WTC11 (cell line): ENCODE measurements at regions of chr5 and their contacts with region 1.

Region 1: GRCh38 chr5:151002250-151002649 is 18.1 kb upstream of the GPX3 start:
- DNase-seq: no peak
- ATAC-seq: peak; percentile 75
- H3K4me3 Mint-ChIP-seq: no peak overlapping the region
- H3K27ac Mint-ChIP-seq: no peak overlapping the region
- H3K4me1 Mint-ChIP-seq: peaks cover 12% of the 10 kb centered on the region
- H3K27me3 Mint-ChIP-seq: no peaks in the 10 kb centered on the region
- CTCF ChIP-seq: no peak

Region 2: GRCh38 chr5:150778517-150779396 is 223.5 kb before region 1 on chr5 and contains the start of gene SMIM3:
- CTCF ChIA-PET with region 1: no interaction called
- POLR2A ChIA-PET with region 1: no interaction called
- DNase-seq: peak; percentile 88
- ATAC-seq: peak; percentile 86
- H3K4me3 Mint-ChIP-seq: peak within 1 kb of the TSS; percentile 97
- H3K27ac Mint-ChIP-seq: peak within 1 kb of the TSS; percentile 95
- H3K4me1 Mint-ChIP-seq: peaks cover 49% of the 10 kb centered on the region
- H3K27me3 Mint-ChIP-seq: peaks cover 18% of the 10 kb centered on the region
- CTCF ChIP-seq: no peak
- total RNA-seq, gene SMIM3: 11.1 to 14.1 TPM (median 12.2 TPM) in 3 replicates

Region 3: DNA sequence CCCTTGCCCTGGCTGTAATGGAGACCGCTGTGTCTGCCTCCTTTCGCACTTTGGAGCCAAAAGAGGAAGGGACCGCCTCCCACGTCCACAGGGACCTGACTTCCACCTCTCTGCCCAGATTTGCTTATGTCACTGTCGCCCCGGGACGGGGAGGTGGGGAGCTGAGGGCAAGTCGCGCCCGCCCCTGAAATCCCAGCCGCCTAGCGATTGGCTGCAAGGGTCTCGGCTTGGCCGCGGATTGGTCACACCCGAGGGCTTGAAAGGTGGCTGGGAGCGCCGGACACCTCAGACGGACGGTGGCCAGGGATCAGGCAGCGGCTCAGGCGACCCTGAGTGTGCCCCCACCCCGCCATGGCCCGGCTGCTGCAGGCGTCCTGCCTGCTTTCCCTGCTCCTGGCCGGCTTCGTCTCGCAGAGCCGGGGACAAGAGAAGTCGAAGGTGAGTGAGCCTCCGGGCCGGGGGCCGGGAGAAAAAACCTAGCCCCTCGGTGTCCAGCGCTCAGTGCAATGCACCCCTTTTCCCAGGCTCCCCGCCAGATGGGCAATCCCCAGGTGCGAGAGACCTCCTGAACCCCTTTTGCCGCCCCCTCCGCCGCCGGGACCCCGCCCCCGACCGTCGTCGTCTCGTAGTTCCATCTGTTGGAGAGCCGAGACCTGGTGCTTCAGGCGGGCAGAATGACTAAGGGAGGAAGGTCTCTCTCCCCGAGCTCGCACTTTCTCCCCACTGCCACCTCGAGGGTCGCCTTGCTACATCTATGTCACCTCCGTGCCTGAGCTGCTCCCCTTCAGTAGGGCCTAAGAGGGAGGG is 18.3 kb after region 1 on chr5 and contains the start of gene GPX3:
- CTCF ChIA-PET with region 1: interaction called, 16 read pairs
- POLR2A ChIA-PET with region 1: interaction called, 5 read pairs
- DNase-seq: peak; percentile 89
- ATAC-seq: peak; percentile 99
- H3K4me3 Mint-ChIP-seq: peak within 1 kb of the TSS; percentile 77
- H3K27ac Mint-ChIP-seq: no peak within 1 kb of the TSS
- H3K4me1 Mint-ChIP-seq: peaks cover 4% of the 10 kb centered on the region
- H3K27me3 Mint-ChIP-seq: peaks cover 52% of the 10 kb centered on the region
- CTCF ChIP-seq: no peak
- total RNA-seq, gene GPX3: 24.5 to 26.9 TPM (median 26.2 TPM) in 3 replicates

Region 4: GRCh38 chr5:151080623-151081430 is 78.6 kb after region 1 on chr5 and contains the start of gene TNIP1:
- CTCF ChIA-PET with region 1: interaction called, 11 read pairs
- POLR2A ChIA-PET with region 1: no interaction called
- DNase-seq: peak; percentile 82
- ATAC-seq: peak; percentile 76
- H3K4me3 Mint-ChIP-seq: peak within 1 kb of the TSS; percentile 83
- H3K27ac Mint-ChIP-seq: peak within 1 kb of the TSS; percentile 84; the same call in 1 of the 2 replicates
- H3K4me1 Mint-ChIP-seq: peaks cover 32% of the 10 kb centered on the region
- H3K27me3 Mint-ChIP-seq: no peaks in the 10 kb centered on the region
- CTCF ChIP-seq: no peak
- total RNA-seq, gene TNIP1: 41.1 to 48.9 TPM (median 47.0 TPM) in 3 replicates

Region 5: GRCh38 chr5:151093476-151093889 is 91.2 kb after region 1 on chr5:
- CTCF ChIA-PET with region 1: interaction called, 12 read pairs
- POLR2A ChIA-PET with region 1: no interaction called
- DNase-seq: no peak
- ATAC-seq: no peak; the same call in 1 of the 2 replicates
- H3K4me3 Mint-ChIP-seq: no peak overlapping the region
- H3K27ac Mint-ChIP-seq: no peak overlapping the region
- H3K4me1 Mint-ChIP-seq: peaks cover 29% of the 10 kb centered on the region
- H3K27me3 Mint-ChIP-seq: no peaks in the 10 kb centered on the region
- CTCF ChIP-seq: no peak

Region 6: DNA sequence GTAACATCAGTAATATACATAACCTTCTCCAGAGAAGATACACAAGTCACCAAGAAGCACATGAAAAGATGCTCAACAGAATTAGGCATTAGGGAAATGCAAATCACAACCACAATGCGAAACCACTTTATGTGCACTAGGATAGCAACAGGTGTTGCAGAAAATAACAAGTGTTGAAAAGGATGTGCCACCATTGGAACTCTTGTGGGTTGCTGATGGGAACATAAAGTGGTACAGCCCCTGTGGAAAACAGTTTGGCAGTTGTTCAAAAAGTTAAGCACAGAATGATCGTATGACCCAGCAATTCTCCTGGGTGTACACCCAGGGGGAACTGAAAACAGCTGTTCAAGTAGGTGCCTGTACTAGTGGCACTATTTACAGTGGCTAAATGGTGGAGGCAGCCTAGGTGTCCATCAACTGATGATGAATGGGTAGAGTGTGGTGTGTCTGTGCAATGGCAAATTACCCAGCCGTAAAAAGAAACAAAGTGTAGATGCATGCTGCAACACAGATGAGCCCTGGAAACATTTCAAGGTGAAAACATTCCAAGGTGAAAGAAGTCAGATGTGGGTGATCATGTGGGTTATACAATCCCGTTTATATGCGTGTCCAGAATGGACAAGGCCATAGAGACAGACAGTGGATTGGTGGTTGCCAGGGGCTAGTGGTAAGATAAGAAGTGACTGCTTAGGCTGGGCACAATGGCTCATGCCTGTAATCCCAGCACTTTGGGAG is 194.5 kb after region 1 on chr5:
- CTCF ChIA-PET with region 1: no interaction called
- POLR2A ChIA-PET with region 1: no interaction called
- DNase-seq: no peak
- ATAC-seq: no peak
- H3K4me3 Mint-ChIP-seq: no peak overlapping the region
- H3K27ac Mint-ChIP-seq: no peak overlapping the region
- H3K4me1 Mint-ChIP-seq: no peaks in the 10 kb centered on the region; the same call in 1 of the 2 replicates
- H3K27me3 Mint-ChIP-seq: no peaks in the 10 kb centered on the region
- CTCF ChIP-seq: no peak